IMR-90 (cell line): ENCODE measurements at regions of chr10 and their contacts with region 1.

Region 1: GRCh38 chr10:86899670-86900276 is 57.6 kb downstream of the MMRN2 start:
- DNase-seq: peak; percentile 71
- ATAC-seq: peak; percentile 81
- H3K4me3 ChIP-seq: no peak overlapping the region
- H3K27ac ChIP-seq: no peak overlapping the region
- H3K4me1 ChIP-seq: peaks cover 2% of the 10 kb centered on the region
- H3K27me3 ChIP-seq: no peaks in the 10 kb centered on the region
- CTCF ChIP-seq: peak; percentile 74
- POLR2A ChIP-seq: no peak
- RAD21 ChIP-seq: peak; percentile 77

Region 2: DNA sequence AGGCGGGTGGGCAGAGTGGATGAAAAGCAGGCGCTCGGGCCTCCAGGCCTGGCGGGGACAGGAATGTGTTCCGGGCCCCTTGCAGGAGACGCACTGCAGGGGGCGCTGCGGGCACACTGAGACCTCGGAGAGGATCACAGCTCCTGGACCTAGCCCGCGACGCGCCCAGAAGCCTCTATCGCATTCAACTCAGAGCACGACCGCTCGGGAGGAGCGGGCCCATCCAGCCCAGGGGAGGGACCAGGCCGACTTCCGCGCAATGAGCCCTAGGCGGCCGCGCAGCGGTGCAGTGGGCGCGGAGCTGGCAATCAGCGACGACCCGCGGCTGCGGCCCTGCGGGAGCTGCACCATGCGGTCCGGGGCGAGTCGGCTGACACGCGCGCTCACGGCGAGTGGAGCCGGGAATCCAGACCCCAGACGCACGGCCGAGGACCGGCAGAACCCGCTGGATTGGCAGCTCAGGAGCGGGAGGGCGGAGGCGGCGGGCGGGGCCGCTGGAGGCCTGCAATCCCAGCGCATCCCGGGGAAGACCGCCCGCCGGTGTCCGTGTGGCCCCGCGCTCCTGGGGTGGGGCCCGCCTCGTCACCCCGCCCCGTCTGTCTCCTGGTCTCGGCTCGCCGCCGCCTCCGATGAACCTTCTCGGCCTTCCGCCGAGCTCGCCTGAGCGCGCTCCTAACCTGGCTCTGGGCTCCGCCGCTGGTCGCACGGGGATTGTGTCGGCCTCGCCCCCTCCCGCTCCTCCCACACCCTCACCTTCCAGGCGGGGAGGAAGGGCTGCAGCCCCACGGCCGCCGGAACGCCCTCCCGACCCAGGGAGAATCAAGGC is 499.7 kb before region 1 on chr10:
- CTCF ChIA-PET with region 1: no interaction called
- POLR2A ChIA-PET with region 1: no interaction called
- dilution Hi-C with region 1: no loop called
- in situ Hi-C with region 1: loop called (anchors 10 kb)
- intact Hi-C with region 1: no loop called
- DNase-seq: peak; percentile 94
- ATAC-seq: peak; percentile 95
- H3K4me3 ChIP-seq: peak overlapping the region; percentile 65
- H3K27ac ChIP-seq: peak overlapping the region; percentile 65
- H3K4me1 ChIP-seq: peaks cover 10% of the 10 kb centered on the region
- H3K27me3 ChIP-seq: peaks cover 4% of the 10 kb centered on the region; the same call in 1 of the 2 replicates
- CTCF ChIP-seq: peak; percentile 95
- POLR2A ChIP-seq: peak; percentile 26; the same call in 1 of the 2 replicates
- RAD21 ChIP-seq: peak; percentile 94

Region 3: GRCh38 chr10:86521678-86522509 is 377.9 kb before region 1 on chr10 and contains the start of gene WAPL:
- CTCF ChIA-PET with region 1: no interaction called
- POLR2A ChIA-PET with region 1: no interaction called
- dilution Hi-C with region 1: no loop called
- in situ Hi-C with region 1: loop called (anchors 25 kb)
- intact Hi-C with region 1: no loop called
- DNase-seq: peak; percentile 90
- ATAC-seq: peak; percentile 98
- H3K4me3 ChIP-seq: peak within 1 kb of the TSS; percentile 68
- H3K27ac ChIP-seq: peak within 1 kb of the TSS; percentile 81
- H3K4me1 ChIP-seq: no peaks in the 10 kb centered on the region; the same call in 1 of the 2 replicates
- H3K27me3 ChIP-seq: no peaks in the 10 kb centered on the region
- CTCF ChIP-seq: no peak
- POLR2A ChIP-seq: no peak
- RAD21 ChIP-seq: no peak
- total RNA-seq, gene WAPL: 31.7 and 49.4 TPM in 2 replicates

Region 4: DNA sequence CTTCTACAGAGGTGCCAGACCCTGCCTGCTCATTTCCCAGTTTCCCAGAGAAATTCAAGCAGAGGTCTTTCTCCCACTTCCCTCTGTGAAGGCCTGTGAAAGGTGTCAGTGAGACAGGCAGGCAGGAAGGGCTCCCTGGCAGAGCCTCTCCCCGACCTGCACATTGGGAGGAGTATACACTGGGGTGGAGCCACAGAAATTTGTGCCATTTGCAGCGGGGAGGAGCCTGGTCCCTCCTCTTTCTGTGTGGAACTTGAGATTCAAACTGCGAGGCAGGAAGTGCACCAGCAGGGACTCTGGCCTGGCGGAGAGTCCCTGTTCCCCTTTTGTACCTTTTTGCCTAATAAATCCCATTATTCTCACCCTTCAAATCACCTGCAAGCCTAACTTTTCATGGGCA is 300.0 kb before region 1 on chr10:
- CTCF ChIA-PET with region 1: no interaction called
- POLR2A ChIA-PET with region 1: no interaction called
- dilution Hi-C with region 1: no loop called
- in situ Hi-C with region 1: no loop called
- intact Hi-C with region 1: no loop called
- DNase-seq: no peak
- ATAC-seq: no peak
- H3K4me3 ChIP-seq: no peak overlapping the region
- H3K27ac ChIP-seq: no peak overlapping the region
- H3K4me1 ChIP-seq: no peaks in the 10 kb centered on the region; the same call in 1 of the 2 replicates
- H3K27me3 ChIP-seq: peaks cover 6% of the 10 kb centered on the region
- CTCF ChIP-seq: no peak
- POLR2A ChIP-seq: no peak
- RAD21 ChIP-seq: no peak

Region 5: DNA sequence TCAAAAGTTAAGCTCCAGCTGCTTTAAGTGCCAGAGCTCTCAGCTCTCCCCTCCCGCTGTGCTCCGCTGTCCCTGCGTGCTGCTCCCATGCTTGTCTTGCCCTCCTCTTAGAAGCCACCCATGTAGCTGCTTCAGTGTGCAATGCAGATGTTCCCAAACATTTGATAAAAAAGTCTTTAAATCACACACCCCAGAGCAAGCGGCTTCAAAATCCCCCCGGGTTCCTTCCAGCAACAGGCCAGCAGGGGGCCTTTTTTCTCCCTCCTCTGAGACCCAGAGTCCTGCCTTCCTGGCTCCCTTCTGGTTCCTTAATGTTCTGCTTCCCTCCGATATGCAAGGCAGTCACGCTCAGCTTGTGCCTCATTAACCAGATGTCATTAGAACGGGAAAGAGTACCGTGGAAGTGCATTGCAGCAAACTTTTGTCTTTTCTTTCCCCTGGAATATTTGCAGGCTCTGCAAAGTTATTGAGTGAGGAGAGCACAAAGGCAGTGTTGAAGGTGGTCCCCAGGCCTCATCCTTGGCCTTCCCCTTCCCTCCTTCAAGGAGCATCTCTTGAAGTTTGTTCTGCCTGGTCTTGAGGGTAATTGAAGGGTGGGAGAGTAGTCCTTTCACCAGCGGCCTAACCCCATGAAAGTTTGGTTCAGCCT is 205.9 kb before region 1 on chr10:
- CTCF ChIA-PET with region 1: interaction called, 12 read pairs
- POLR2A ChIA-PET with region 1: no interaction called
- dilution Hi-C with region 1: no loop called
- in situ Hi-C with region 1: no loop called
- intact Hi-C with region 1: loop called (anchors 1 kb)
- DNase-seq: peak; percentile 51
- ATAC-seq: peak; percentile 93
- H3K4me3 ChIP-seq: no peak overlapping the region
- H3K27ac ChIP-seq: no peak overlapping the region
- H3K4me1 ChIP-seq: peaks cover 6% of the 10 kb centered on the region; the same call in 1 of the 2 replicates
- H3K27me3 ChIP-seq: no peaks in the 10 kb centered on the region
- CTCF ChIP-seq: peak; percentile 75
- POLR2A ChIP-seq: no peak
- RAD21 ChIP-seq: peak; percentile 60

Region 6: GRCh38 chr10:86710987-86711512 is 188.7 kb before region 1 on chr10:
- CTCF ChIA-PET with region 1: interaction called, 4 read pairs
- POLR2A ChIA-PET with region 1: no interaction called
- dilution Hi-C with region 1: no loop called
- in situ Hi-C with region 1: loop called (anchors 5 kb)
- intact Hi-C with region 1: loop called (anchors 1 kb)
- DNase-seq: peak; percentile 85
- ATAC-seq: peak; percentile 95
- H3K4me3 ChIP-seq: peak overlapping the region; percentile 51
- H3K27ac ChIP-seq: peak overlapping the region; percentile 71
- H3K4me1 ChIP-seq: peaks cover 8% of the 10 kb centered on the region
- H3K27me3 ChIP-seq: no peaks in the 10 kb centered on the region
- CTCF ChIP-seq: peak; percentile 98
- POLR2A ChIP-seq: peak; percentile 68
- RAD21 ChIP-seq: peak; percentile 87

Region 7: GRCh38 chr10:86755740-86756510 is 143.8 kb before region 1 on chr10:
- CTCF ChIA-PET with region 1: no interaction called
- POLR2A ChIA-PET with region 1: interaction called, 6 read pairs
- dilution Hi-C with region 1: no loop called
- in situ Hi-C with region 1: no loop called
- intact Hi-C with region 1: loop called (anchors 1 kb)
- DNase-seq: peak; percentile 82
- ATAC-seq: peak; percentile 91
- H3K4me3 ChIP-seq: peak overlapping the region; percentile 74
- H3K27ac ChIP-seq: peak overlapping the region; percentile 98
- H3K4me1 ChIP-seq: peaks cover 2% of the 10 kb centered on the region; the same call in 1 of the 2 replicates
- H3K27me3 ChIP-seq: no peaks in the 10 kb centered on the region
- CTCF ChIP-seq: no peak
- POLR2A ChIP-seq: peak; percentile 83
- RAD21 ChIP-seq: no peak

Region 8: DNA sequence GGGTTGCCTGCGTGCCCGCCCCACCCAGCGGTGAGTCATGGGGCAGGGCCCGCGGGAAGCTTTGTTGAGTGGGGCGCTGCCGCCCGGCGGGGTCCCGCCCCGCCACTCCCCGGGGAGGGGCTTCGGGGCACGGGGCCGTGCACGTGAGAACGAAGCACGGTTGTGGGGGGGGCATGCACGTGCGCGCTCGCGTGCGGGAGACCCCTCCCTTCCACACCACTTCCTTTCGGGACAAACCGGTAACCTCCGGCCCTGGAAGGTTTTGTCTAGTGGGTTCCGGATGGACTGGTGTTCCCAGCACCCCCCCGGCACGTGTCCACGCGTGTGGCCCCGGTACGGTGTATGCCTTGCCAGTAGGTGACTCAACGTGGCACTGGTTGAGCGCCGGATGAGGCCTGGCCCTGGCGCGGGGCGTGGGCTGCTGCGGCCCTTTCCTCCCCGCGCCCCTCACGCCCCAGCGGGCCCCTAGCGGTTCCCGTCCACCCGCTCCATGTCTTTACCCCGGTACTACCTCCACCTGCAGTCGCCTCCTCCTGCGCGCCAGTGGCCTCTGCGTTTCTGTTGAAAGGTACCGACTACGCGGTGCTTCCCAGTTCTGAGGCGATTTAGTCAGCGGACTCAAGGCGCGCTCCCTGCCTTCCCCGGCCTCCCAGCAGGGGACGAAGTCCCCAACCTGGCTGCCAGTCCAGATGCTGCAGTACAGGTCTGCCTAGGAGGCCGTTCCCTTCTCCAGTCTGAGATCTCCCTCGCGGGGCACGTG is 71.6 kb after region 1 on chr10:
- CTCF ChIA-PET with region 1: no interaction called
- POLR2A ChIA-PET with region 1: no interaction called
- dilution Hi-C with region 1: no loop called
- in situ Hi-C with region 1: no loop called
- intact Hi-C with region 1: no loop called
- DNase-seq: peak; percentile 85
- ATAC-seq: peak; percentile 79
- H3K4me3 ChIP-seq: peak overlapping the region; percentile 75
- H3K27ac ChIP-seq: peak overlapping the region; percentile 92
- H3K4me1 ChIP-seq: peaks cover 35% of the 10 kb centered on the region
- H3K27me3 ChIP-seq: no peaks in the 10 kb centered on the region
- CTCF ChIP-seq: no peak
- POLR2A ChIP-seq: no peak
- RAD21 ChIP-seq: no peak

Region 9: GRCh38 chr10:87000491-87000890 is 100.7 kb after region 1 on chr10:
- CTCF ChIA-PET with region 1: no interaction called
- POLR2A ChIA-PET with region 1: no interaction called
- dilution Hi-C with region 1: no loop called
- in situ Hi-C with region 1: no loop called
- intact Hi-C with region 1: no loop called
- DNase-seq: peak; percentile 44
- ATAC-seq: peak; percentile 60; the same call in 1 of the 2 replicates
- H3K4me3 ChIP-seq: no peak overlapping the region
- H3K27ac ChIP-seq: no peak overlapping the region
- H3K4me1 ChIP-seq: 0 out of 2 replicates have a peak, but pooled peaks cover 2% of the 10 kb centered on the region
- H3K27me3 ChIP-seq: no peaks in the 10 kb centered on the region
- CTCF ChIP-seq: no peak
- POLR2A ChIP-seq: no peak
- RAD21 ChIP-seq: no peak